Endothelial cell of umbilical vein (primary cell): ENCODE measurements at regions of chr1 and their contacts with region 1.

Region 1: GRCh38 chr1:61077676-61078541 is 4.5 kb upstream of the NFIA start:
- DNase-seq: peak; percentile 100
- H3K4me3 ChIP-seq: peak overlapping the region; percentile 44 to 97 (median 77)
- H3K27ac ChIP-seq: peak overlapping the region; percentile 45
- H3K4me1 ChIP-seq: peaks cover 41% of the 10 kb centered on the region
- H3K27me3 ChIP-seq: no peaks in the 10 kb centered on the region
- CTCF ChIP-seq: no peak
- POLR2A ChIP-seq: peak; percentile 10

Region 2: DNA sequence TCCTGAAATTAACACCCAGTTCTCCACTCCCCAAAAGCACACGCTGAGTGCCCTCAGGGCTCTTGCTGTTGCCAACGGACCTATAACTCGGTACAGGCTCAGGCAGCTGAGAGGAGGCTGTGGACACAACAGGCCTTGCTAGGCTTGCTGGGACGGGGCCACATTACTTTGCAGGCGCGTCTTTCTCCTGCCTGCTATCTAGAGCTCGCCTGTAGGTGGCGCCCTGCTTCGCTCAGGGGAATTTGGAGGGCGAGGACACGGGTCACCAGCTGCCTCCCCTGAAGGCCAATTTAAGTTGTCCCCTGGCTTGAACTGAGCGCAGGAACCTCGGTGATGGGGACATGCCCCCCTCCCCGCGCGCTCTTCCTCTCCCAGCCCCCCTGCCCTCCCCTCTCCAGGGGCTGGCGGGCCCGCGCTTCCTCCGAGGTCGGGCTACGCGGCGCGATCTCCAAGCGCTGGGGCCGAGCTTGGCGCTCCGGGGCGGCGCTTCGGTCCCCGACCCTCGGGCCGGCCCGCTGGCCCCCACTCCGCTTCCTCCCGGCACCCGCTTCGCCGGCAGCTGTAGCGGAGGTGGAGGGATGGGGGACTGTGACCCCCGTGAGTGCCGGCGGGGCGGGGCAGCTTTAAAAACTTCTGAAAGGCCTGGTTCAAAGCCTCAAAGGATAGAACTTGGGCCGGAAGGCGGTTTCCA is 27.9 kb before region 1 on chr1:
- CTCF ChIA-PET with region 1: interaction called, 78 read pairs
- POLR2A ChIA-PET with region 1: interaction called, 9 read pairs
- dilution Hi-C with region 1: no loop called
- intact Hi-C with region 1: loop called (anchors 1 kb)
- DNase-seq: peak; percentile 93
- H3K4me3 ChIP-seq: peak overlapping the region; percentile 62 to 95 (median 92)
- H3K27ac ChIP-seq: peak overlapping the region; percentile 84
- H3K4me1 ChIP-seq: peaks cover 16% of the 10 kb centered on the region
- H3K27me3 ChIP-seq: no peaks in the 10 kb centered on the region
- CTCF ChIP-seq: peak; percentile 89 to 96
- POLR2A ChIP-seq: peak; percentile 40

Region 3: DNA sequence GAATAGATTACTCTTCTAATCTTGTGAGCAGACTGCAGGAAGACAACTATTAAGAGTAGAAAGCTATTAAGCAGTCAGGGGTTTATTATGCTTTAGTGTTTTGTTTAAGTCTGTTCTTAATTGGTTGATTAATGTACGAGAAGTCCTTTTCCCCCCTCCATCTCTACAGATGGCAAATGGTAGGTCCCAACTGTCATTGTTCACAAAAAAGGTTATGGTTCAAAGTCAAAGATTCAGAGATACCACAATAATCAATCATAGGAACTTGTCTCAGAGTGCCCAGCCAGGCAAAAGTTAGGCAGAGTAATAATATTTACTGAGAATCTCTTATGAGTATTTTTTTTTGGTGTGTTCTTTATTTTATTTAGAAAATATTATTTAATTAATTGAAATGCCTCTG is 31.2 kb after region 1 on chr1:
- CTCF ChIA-PET with region 1: no interaction called
- POLR2A ChIA-PET with region 1: no interaction called
- dilution Hi-C with region 1: no loop called
- intact Hi-C with region 1: no loop called
- DNase-seq: no peak
- H3K4me3 ChIP-seq: no peak overlapping the region
- H3K27ac ChIP-seq: no peak overlapping the region
- H3K4me1 ChIP-seq: no peaks in the 10 kb centered on the region
- H3K27me3 ChIP-seq: no peaks in the 10 kb centered on the region
- CTCF ChIP-seq: no peak
- POLR2A ChIP-seq: no peak

Region 4: GRCh38 chr1:61132176-61133001 is 54.5 kb after region 1 on chr1:
- CTCF ChIA-PET with region 1: no interaction called
- POLR2A ChIA-PET with region 1: no interaction called
- dilution Hi-C with region 1: no loop called
- intact Hi-C with region 1: loop called (anchors 1 kb)
- DNase-seq: peak; percentile 91
- H3K4me3 ChIP-seq: peak overlapping the region in 1 of 3 experiments; percentile 53
- H3K27ac ChIP-seq: peak overlapping the region; percentile 75
- H3K4me1 ChIP-seq: peaks cover 23% of the 10 kb centered on the region
- H3K27me3 ChIP-seq: no peaks in the 10 kb centered on the region
- CTCF ChIP-seq: no peak
- POLR2A ChIP-seq: no peak

Region 5: GRCh38 chr1:61287734-61288133 is 209.8 kb after region 1 on chr1:
- CTCF ChIA-PET with region 1: no interaction called
- POLR2A ChIA-PET with region 1: no interaction called
- dilution Hi-C with region 1: no loop called
- intact Hi-C with region 1: loop called (anchors 2 kb)
- DNase-seq: peak; percentile 90
- H3K4me3 ChIP-seq: no peak overlapping the region
- H3K27ac ChIP-seq: peak overlapping the region; percentile 87
- H3K4me1 ChIP-seq: peaks cover 29% of the 10 kb centered on the region
- H3K27me3 ChIP-seq: no peaks in the 10 kb centered on the region
- CTCF ChIP-seq: no peak
- POLR2A ChIP-seq: no peak

Region 6: DNA sequence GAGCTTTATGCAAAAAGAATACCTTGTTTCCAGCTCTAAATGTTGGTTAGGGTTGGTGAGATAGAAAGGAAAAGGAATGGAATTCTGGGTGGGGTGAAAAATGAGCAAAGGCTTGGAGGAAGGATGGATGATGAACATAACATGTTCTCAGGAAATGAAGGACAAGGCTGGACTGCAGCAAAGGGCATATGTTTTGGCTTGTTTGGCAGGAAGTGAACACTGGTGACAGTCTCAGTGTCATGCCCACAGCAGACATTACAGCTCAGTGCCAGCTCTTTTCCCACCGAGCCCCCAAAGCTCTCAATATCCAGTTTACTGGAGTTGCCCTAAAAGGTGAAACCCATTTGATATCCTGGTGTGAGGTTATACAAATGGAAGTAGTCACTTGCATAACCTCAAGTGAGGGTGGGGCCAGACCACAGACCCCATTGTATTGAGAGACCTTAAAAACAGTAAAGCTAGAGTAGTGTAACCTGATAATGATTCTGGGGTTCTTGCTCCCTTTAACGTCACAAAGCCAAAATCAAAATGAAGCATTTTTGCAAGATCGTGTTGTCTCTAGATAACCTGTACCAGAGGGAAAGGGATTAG is 275.0 kb after region 1 on chr1:
- CTCF ChIA-PET with region 1: no interaction called
- POLR2A ChIA-PET with region 1: no interaction called
- dilution Hi-C with region 1: no loop called
- intact Hi-C with region 1: loop called (anchors 5 kb)
- DNase-seq: no peak
- H3K4me3 ChIP-seq: no peak overlapping the region
- H3K27ac ChIP-seq: no peak overlapping the region
- H3K4me1 ChIP-seq: peaks cover 18% of the 10 kb centered on the region
- H3K27me3 ChIP-seq: no peaks in the 10 kb centered on the region
- CTCF ChIP-seq: no peak
- POLR2A ChIP-seq: no peak

Region 7: GRCh38 chr1:61956016-61956645 is 878.2 kb after region 1 on chr1:
- CTCF ChIA-PET with region 1: no interaction called
- POLR2A ChIA-PET with region 1: no interaction called
- dilution Hi-C with region 1: no loop called
- intact Hi-C with region 1: no loop called
- DNase-seq: no peak
- H3K4me3 ChIP-seq: no peak overlapping the region
- H3K27ac ChIP-seq: no peak overlapping the region
- H3K4me1 ChIP-seq: no peaks in the 10 kb centered on the region
- H3K27me3 ChIP-seq: no peaks in the 10 kb centered on the region
- CTCF ChIP-seq: no peak
- POLR2A ChIP-seq: no peak